SK-N-SH (cell line): ENCODE measurements at regions of chr4 and their contacts with region 1.

Region 1: GRCh38 chr4:140153718-140154571 is at the start of gene MAML3:
- DNase-seq: peak; percentile 90
- H3K4me3 ChIP-seq: peak within 1 kb of the TSS; percentile 94 to 97
- H3K27ac ChIP-seq: peak within 1 kb of the TSS; percentile 98 to 99
- H3K4me1 ChIP-seq: peaks cover 0 to 17% of the 10 kb centered on the region in 2 experiments; a peak in 2 of 4 replicates
- H3K27me3 ChIP-seq: no peaks in the 10 kb centered on the region
- CTCF ChIP-seq: no peak
- EP300 ChIP-seq: peak; percentile 18 to 79; a peak in 3 of 4 replicates
- RAD21 ChIP-seq: no peak; the same call in 1 of the 2 replicates
- polyA plus RNA-seq, gene MAML3: 5.3 and 5.6 TPM in 2 replicates

Region 2: GRCh38 chr4:139656614-139657486 is 497.1 kb before region 1 on chr4:
- CTCF ChIA-PET with region 1: interaction called, 6 read pairs
- POLR2A ChIA-PET with region 1: interaction called, 12 read pairs
- DNase-seq: peak; percentile 74
- H3K4me3 ChIP-seq: peak overlapping the region in 1 of 2 experiments; percentile 26; a peak in 2 of 4 replicates
- H3K27ac ChIP-seq: no peak overlapping the region
- H3K4me1 ChIP-seq: peaks cover 6 to 11% of the 10 kb centered on the region in 2 experiments; a peak in 2 of 4 replicates
- H3K27me3 ChIP-seq: no peaks in the 10 kb centered on the region
- CTCF ChIP-seq: peak; percentile 88
- EP300 ChIP-seq: no peak
- RAD21 ChIP-seq: peak; percentile 59

Region 3: GRCh38 chr4:139943277-139943676 is 210.7 kb before region 1 on chr4:
- CTCF ChIA-PET with region 1: no interaction called
- POLR2A ChIA-PET with region 1: interaction called, 11 read pairs
- DNase-seq: no peak
- H3K4me3 ChIP-seq: no peak overlapping the region
- H3K27ac ChIP-seq: peak overlapping the region; percentile 19 to 100; a peak in 3 of 4 replicates
- H3K4me1 ChIP-seq: peaks cover 5 to 31% of the 10 kb centered on the region in 2 experiments; a peak in 3 of 4 replicates
- H3K27me3 ChIP-seq: no peaks in the 10 kb centered on the region
- CTCF ChIP-seq: no peak
- EP300 ChIP-seq: no peak
- RAD21 ChIP-seq: no peak

Region 4: GRCh38 chr4:140094438-140095420 is 59.2 kb before region 1 on chr4:
- CTCF ChIA-PET with region 1: interaction called, 3 read pairs
- POLR2A ChIA-PET with region 1: interaction called, 46 read pairs
- DNase-seq: peak; percentile 65
- H3K4me3 ChIP-seq: peak overlapping the region in 1 of 2 experiments; percentile 25; a peak in 2 of 4 replicates
- H3K27ac ChIP-seq: peak overlapping the region; percentile 97
- H3K4me1 ChIP-seq: peaks cover 66 to 67% of the 10 kb centered on the region in 2 experiments
- H3K27me3 ChIP-seq: no peaks in the 10 kb centered on the region
- CTCF ChIP-seq: no peak
- EP300 ChIP-seq: no peak
- RAD21 ChIP-seq: no peak

Region 5: GRCh38 chr4:140237606-140237986 is 83.7 kb after region 1 on chr4:
- CTCF ChIA-PET with region 1: interaction called, 10 read pairs
- POLR2A ChIA-PET with region 1: interaction called, 80 read pairs
- DNase-seq: peak; percentile 88
- H3K4me3 ChIP-seq: peak overlapping the region; percentile 29 to 31; a peak in 3 of 4 replicates
- H3K27ac ChIP-seq: peak overlapping the region; percentile 84 to 100
- H3K4me1 ChIP-seq: peaks cover 34 to 45% of the 10 kb centered on the region in 2 experiments
- H3K27me3 ChIP-seq: no peaks in the 10 kb centered on the region
- CTCF ChIP-seq: no peak
- EP300 ChIP-seq: peak; percentile 54 to 86; a peak in 3 of 4 replicates
- RAD21 ChIP-seq: peak; percentile 31

Region 6: DNA sequence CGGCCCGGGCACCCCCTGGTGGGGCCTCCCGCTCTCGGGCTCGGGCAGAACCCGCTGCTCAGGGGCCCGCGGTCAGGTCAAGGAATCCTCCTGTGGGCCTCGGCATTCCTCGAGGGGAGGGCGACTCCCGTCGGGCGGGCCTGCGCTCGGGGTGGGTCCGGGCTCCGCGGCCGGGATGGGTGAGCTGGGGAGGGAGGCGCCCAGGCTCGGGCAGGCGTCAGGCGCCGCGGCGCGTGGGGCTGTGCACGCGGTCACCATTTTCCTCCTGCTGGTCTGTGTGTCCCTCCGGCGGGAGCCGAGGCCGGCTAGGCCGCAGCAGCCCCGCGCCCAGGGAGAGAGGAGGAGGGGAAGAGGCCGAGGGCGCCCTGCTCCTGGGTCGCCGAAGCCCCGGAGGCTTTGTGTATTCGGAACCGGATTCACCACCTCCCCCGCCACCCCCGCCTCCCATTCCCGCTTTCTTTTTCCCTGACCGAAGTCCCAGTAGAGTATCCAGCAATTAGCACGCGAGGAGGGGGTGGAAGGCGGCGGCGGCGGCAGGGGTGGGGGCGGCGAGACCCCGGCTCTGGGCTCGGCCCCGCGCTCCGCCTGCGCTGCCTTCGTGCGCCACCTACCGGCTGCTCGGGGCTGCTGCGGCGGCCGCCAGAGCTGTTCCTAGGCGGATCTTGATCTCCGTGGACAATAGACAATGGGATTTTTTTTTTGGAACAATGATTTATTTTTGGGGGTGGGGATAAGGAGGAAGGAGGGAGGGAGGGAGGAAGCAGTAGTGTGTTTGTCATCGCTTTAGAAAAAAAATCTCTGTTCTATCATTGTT is 99.0 kb after region 1 on chr4:
- CTCF ChIA-PET with region 1: interaction called, 91 read pairs
- POLR2A ChIA-PET with region 1: interaction called, 52 read pairs
- DNase-seq: peak; percentile 94
- H3K4me3 ChIP-seq: peak overlapping the region; percentile 47 to 55
- H3K27ac ChIP-seq: peak overlapping the region; percentile 78 to 92
- H3K4me1 ChIP-seq: peaks cover 49 to 57% of the 10 kb centered on the region in 2 experiments
- H3K27me3 ChIP-seq: no peaks in the 10 kb centered on the region
- CTCF ChIP-seq: peak; percentile 87
- EP300 ChIP-seq: peak in 1 of 2 experiments; percentile 40; a peak in 1 of 4 replicates
- RAD21 ChIP-seq: peak; percentile 85

Region 7: GRCh38 chr4:140406292-140406691 is 252.3 kb after region 1 on chr4:
- CTCF ChIA-PET with region 1: no interaction called
- POLR2A ChIA-PET with region 1: no interaction called
- DNase-seq: no peak
- H3K4me3 ChIP-seq: no peak overlapping the region
- H3K27ac ChIP-seq: no peak overlapping the region
- H3K4me1 ChIP-seq: no peaks in the 10 kb centered on the region; a peak in 1 of 4 replicates
- H3K27me3 ChIP-seq: no peaks in the 10 kb centered on the region
- CTCF ChIP-seq: no peak
- EP300 ChIP-seq: no peak
- RAD21 ChIP-seq: no peak